CD8-positive, alpha-beta memory T cell (primary cell): ENCODE measurements at regions of chr7 and their contacts with region 1.

Region 1: GRCh38 chr7:116224492-116225098 is 14.3 kb downstream of the TES start:
- DNase-seq: no peak
- H3K4me3 ChIP-seq: peak overlapping the region; percentile 14
- H3K4me3 Mint-ChIP-seq: peak overlapping the region in 6 of 7 donors; percentile 48 to 79 (median 74)
- H3K27ac ChIP-seq: no peak overlapping the region
- H3K27ac Mint-ChIP-seq: peak overlapping the region; percentile 0 to 85 (median 60)
- H3K4me1 ChIP-seq: peaks cover 84% of the 10 kb centered on the region
- H3K4me1 Mint-ChIP-seq: peaks cover 88 to 96% (median 94%) of the 10 kb centered on the region in 3 donors
- H3K27me3 ChIP-seq: no peaks in the 10 kb centered on the region
- H3K27me3 Mint-ChIP-seq: no peaks in the 10 kb centered on the region

Region 2: DNA sequence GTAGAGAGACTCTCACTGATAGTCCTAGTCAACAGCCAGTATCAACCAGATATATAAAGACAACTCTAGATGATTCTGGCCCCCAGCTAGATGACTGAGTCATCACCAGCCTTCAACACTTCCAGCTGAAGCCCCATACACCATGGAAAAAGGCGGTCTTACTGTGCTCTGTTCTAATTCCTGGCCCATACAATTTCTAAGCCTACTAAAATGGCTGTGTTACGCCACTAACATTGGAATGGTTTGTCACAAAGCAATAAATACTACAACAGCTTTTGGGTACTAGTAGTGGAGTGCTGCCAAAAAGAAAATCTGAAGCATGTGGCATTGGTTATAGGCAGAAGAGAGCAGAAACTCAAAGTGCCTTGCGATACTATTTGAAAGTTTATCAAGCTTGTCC is 27.2 kb before region 1 on chr7:
- CTCF ChIA-PET with region 1: no interaction called
- POLR2A ChIA-PET with region 1: no interaction called
- DNase-seq: no peak
- H3K4me3 ChIP-seq: no peak overlapping the region
- H3K4me3 Mint-ChIP-seq: no peak overlapping the region
- H3K27ac ChIP-seq: no peak overlapping the region
- H3K27ac Mint-ChIP-seq: no peak overlapping the region
- H3K4me1 ChIP-seq: no peaks in the 10 kb centered on the region
- H3K4me1 Mint-ChIP-seq: no peaks in the 10 kb centered on the region
- H3K27me3 ChIP-seq: no peaks in the 10 kb centered on the region
- H3K27me3 Mint-ChIP-seq: peaks cover 0 to 4% of the 10 kb centered on the region in 2 donors

Region 3: GRCh38 chr7:116258734-116259133 is 34.1 kb after region 1 on chr7:
- CTCF ChIA-PET with region 1: no interaction called
- POLR2A ChIA-PET with region 1: interaction called, 10 read pairs
- DNase-seq: peak in 2 of 5 donors; percentile 34 to 42
- H3K4me3 ChIP-seq: no peak overlapping the region
- H3K4me3 Mint-ChIP-seq: no peak overlapping the region
- H3K27ac ChIP-seq: no peak overlapping the region
- H3K27ac Mint-ChIP-seq: peak overlapping the region in 7 of 8 donors; percentile 5 to 78 (median 40)
- H3K4me1 ChIP-seq: no peaks in the 10 kb centered on the region
- H3K4me1 Mint-ChIP-seq: peaks cover 8 to 18% (median 13%) of the 10 kb centered on the region in 3 donors
- H3K27me3 ChIP-seq: no peaks in the 10 kb centered on the region
- H3K27me3 Mint-ChIP-seq: peaks cover 0 to 2% of the 10 kb centered on the region in 2 donors